CD4-positive, alpha-beta T cell (primary cell): ENCODE measurements at regions of chr10 and their contacts with region 1.

Region 1: GRCh38 chr10:13586676-13587355 is at the start of gene PRPF18:
- DNase-seq: peak; percentile 92 to 96 (median 95)
- ATAC-seq: peak; percentile 99
- H3K4me3 ChIP-seq: peak within 1 kb of the TSS; percentile 71
- H3K4me3 Mint-ChIP-seq: peak within 1 kb of the TSS; percentile 99
- H3K27ac ChIP-seq: peak within 1 kb of the TSS in 1 of 2 donors; percentile 26
- H3K27ac Mint-ChIP-seq: peak within 1 kb of the TSS; percentile 85
- H3K4me1 ChIP-seq: peaks cover 13% of the 10 kb centered on the region
- H3K4me1 Mint-ChIP-seq: peaks cover 47% of the 10 kb centered on the region
- H3K27me3 ChIP-seq: peaks cover 12 to 15% of the 10 kb centered on the region in 2 experiments
- H3K27me3 Mint-ChIP-seq: peaks cover 32% of the 10 kb centered on the region
- CTCF ChIP-seq: peak; percentile 94
- total RNA-seq, gene PRPF18: 20.7 to 22.7 TPM

Region 2: GRCh38 chr10:12195603-12196506 is 1391.0 kb before region 1 on chr10 and contains the starts of genes CDC123 and NUDT5:
- CTCF ChIA-PET with region 1: no interaction called
- POLR2A ChIA-PET with region 1: no interaction called
- intact Hi-C with region 1: loop called in 1 of 2 experiments (anchors 5 kb)
- DNase-seq: peak; percentile 73 to 93 (median 79)
- ATAC-seq: peak; percentile 91
- H3K4me3 ChIP-seq: peak within 1 kb of the TSS; percentile 88
- H3K4me3 Mint-ChIP-seq: peak within 1 kb of the TSS; percentile 97
- H3K27ac ChIP-seq: peak within 1 kb of the TSS; percentile 94 to 96
- H3K27ac Mint-ChIP-seq: peak within 1 kb of the TSS; percentile 96
- H3K4me1 ChIP-seq: peaks cover 27% of the 10 kb centered on the region
- H3K4me1 Mint-ChIP-seq: peaks cover 70% of the 10 kb centered on the region
- H3K27me3 ChIP-seq: no peaks in the 10 kb centered on the region
- H3K27me3 Mint-ChIP-seq: no peaks in the 10 kb centered on the region
- CTCF ChIP-seq: no peak
- total RNA-seq, gene CDC123: 34.7 to 40.5 TPM
- total RNA-seq, gene NUDT5: 11.6 to 13.5 TPM

Region 3: GRCh38 chr10:13348216-13349017 is 238.4 kb before region 1 on chr10 and contains the start of gene SEPHS1:
- CTCF ChIA-PET with region 1: no interaction called
- POLR2A ChIA-PET with region 1: interaction called, 4 read pairs
- intact Hi-C with region 1: loop called in 1 of 2 experiments (anchors 5 kb)
- DNase-seq: peak; percentile 67 to 91 (median 81)
- ATAC-seq: peak; percentile 69
- H3K4me3 ChIP-seq: peak within 1 kb of the TSS; percentile 91
- H3K4me3 Mint-ChIP-seq: peak within 1 kb of the TSS; percentile 98
- H3K27ac ChIP-seq: peak within 1 kb of the TSS; percentile 63 to 83
- H3K27ac Mint-ChIP-seq: peak within 1 kb of the TSS; percentile 93
- H3K4me1 ChIP-seq: peaks cover 50% of the 10 kb centered on the region
- H3K4me1 Mint-ChIP-seq: peaks cover 69% of the 10 kb centered on the region
- H3K27me3 ChIP-seq: no peaks in the 10 kb centered on the region
- H3K27me3 Mint-ChIP-seq: no peaks in the 10 kb centered on the region
- CTCF ChIP-seq: no peak
- total RNA-seq, gene SEPHS1: 13.1 to 17.9 TPM

Region 4: GRCh38 chr10:13528875-13529713 is 57.7 kb before region 1 on chr10 and contains the start of gene BEND7:
- CTCF ChIA-PET with region 1: no interaction called
- POLR2A ChIA-PET with region 1: no interaction called
- intact Hi-C with region 1: no loop called
- DNase-seq: peak in 1 of 14 experiments; percentile 17
- ATAC-seq: no peak
- H3K4me3 ChIP-seq: no peak within 1 kb of the TSS
- H3K4me3 Mint-ChIP-seq: peak within 1 kb of the TSS; percentile 80
- H3K27ac ChIP-seq: no peak within 1 kb of the TSS
- H3K27ac Mint-ChIP-seq: no peak within 1 kb of the TSS
- H3K4me1 ChIP-seq: peaks cover 9% of the 10 kb centered on the region
- H3K4me1 Mint-ChIP-seq: peaks cover 10% of the 10 kb centered on the region
- H3K27me3 ChIP-seq: peaks cover 47 to 74% of the 10 kb centered on the region in 2 experiments
- H3K27me3 Mint-ChIP-seq: peaks cover 80% of the 10 kb centered on the region
- CTCF ChIP-seq: no peak
- total RNA-seq, gene BEND7: not detected

Region 5: GRCh38 chr10:13776861-13777311 is 190.1 kb after region 1 on chr10:
- CTCF ChIA-PET with region 1: no interaction called
- POLR2A ChIA-PET with region 1: interaction called, 3 read pairs
- intact Hi-C with region 1: loop called (anchors 1 to 5 kb)
- DNase-seq: peak in 1 of 14 experiments; percentile 28
- ATAC-seq: no peak
- H3K4me3 ChIP-seq: no peak overlapping the region
- H3K4me3 Mint-ChIP-seq: no peak overlapping the region
- H3K27ac ChIP-seq: no peak overlapping the region
- H3K27ac Mint-ChIP-seq: no peak overlapping the region
- H3K4me1 ChIP-seq: peaks cover 2% of the 10 kb centered on the region
- H3K4me1 Mint-ChIP-seq: no peaks in the 10 kb centered on the region
- H3K27me3 ChIP-seq: peaks cover 0 to 3% of the 10 kb centered on the region in 2 experiments
- H3K27me3 Mint-ChIP-seq: peaks cover 19% of the 10 kb centered on the region
- CTCF ChIP-seq: no peak

Region 6: GRCh38 chr10:15097011-15097812 is 1510.4 kb after region 1 on chr10 and contains the start of gene RPP38:
- CTCF ChIA-PET with region 1: interaction called, 3 read pairs
- POLR2A ChIA-PET with region 1: no interaction called
- intact Hi-C with region 1: loop called in 1 of 2 experiments (anchors 5 kb)
- DNase-seq: peak; percentile 89 to 97 (median 92)
- ATAC-seq: peak; percentile 80
- H3K4me3 ChIP-seq: peak within 1 kb of the TSS; percentile 80
- H3K4me3 Mint-ChIP-seq: peak within 1 kb of the TSS; percentile 95
- H3K27ac ChIP-seq: peak within 1 kb of the TSS; percentile 89 to 95
- H3K27ac Mint-ChIP-seq: peak within 1 kb of the TSS; percentile 97
- H3K4me1 ChIP-seq: peaks cover 43% of the 10 kb centered on the region
- H3K4me1 Mint-ChIP-seq: peaks cover 38% of the 10 kb centered on the region
- H3K27me3 ChIP-seq: no peaks in the 10 kb centered on the region
- H3K27me3 Mint-ChIP-seq: no peaks in the 10 kb centered on the region
- CTCF ChIP-seq: no peak
- total RNA-seq, gene RPP38: 12.9 to 14.9 TPM